Activated CD4-positive, alpha-beta T cell treated with anti-CD3 and anti-CD28 coated beads, Interleukin-2, amount 10 ng/mL, durations not matched to agents 24 days and 14 days (primary cell): ENCODE measurements at regions of chr7 and their contacts with region 1.

Region 1: DNA sequence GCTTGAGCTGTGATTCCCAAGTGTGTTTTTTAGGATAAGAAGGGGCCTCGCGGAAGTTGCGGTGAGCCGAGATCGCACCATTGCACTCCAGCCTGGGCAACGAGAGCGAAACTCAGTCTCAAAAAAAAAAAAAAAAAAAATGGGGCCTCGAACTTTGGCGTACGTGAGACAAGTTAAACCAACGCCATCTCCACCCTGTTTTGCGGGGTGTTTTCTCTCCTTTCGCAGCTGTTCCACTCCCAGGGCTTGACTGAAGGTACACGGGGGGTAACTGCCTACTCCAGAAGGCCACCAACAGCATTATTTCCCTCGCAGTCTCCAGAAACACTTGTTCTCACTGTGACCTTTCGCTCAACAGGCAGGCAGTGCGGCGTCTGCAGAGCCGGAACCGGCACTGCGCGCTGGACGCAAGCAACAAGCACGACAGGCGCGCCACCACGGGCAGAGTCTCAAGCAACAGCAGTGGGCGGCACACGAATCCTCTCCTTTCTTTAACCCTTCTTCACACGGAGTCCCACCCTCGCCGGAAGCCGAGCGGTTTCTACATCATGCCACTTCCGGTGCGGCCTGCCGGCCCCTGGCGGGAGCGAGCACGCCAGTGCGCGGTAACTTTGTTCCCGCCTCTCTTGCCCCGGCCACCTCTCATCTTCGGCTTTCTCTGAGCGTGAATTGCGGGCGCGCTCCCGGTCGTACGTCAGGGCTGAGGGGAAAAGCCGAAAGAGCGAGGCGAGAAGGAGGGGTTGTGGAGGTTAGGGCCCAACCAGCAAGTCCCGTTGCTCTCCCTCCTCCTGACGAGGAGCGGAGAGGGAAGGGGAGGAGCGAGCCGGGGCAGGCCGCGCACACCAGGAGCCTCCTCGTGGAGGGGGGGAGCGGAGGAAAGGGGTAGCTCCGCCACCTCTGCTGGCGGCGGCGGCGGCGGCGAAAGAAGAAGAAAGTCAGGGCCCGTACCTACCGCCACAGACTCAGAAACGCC is 814 bp upstream of the CDK13 start:
- DNase-seq: peak; percentile 99
- H3K4me3 Mint-ChIP-seq: peak overlapping the region; percentile 96
- H3K27ac Mint-ChIP-seq: peak overlapping the region; percentile 99
- H3K4me1 Mint-ChIP-seq: peaks cover 33% of the 10 kb centered on the region
- H3K27me3 Mint-ChIP-seq: peaks cover 2% of the 10 kb centered on the region

Region 2: GRCh38 chr7:39589323-39590111 is 359.7 kb before region 1 on chr7:
- intact Hi-C with region 1: loop called (anchors 2 kb)
- DNase-seq: peak; percentile 93
- H3K4me3 Mint-ChIP-seq: peak overlapping the region; percentile 73
- H3K27ac Mint-ChIP-seq: peak overlapping the region; percentile 93
- H3K4me1 Mint-ChIP-seq: peaks cover 38% of the 10 kb centered on the region
- H3K27me3 Mint-ChIP-seq: peaks cover 2% of the 10 kb centered on the region

Region 3: DNA sequence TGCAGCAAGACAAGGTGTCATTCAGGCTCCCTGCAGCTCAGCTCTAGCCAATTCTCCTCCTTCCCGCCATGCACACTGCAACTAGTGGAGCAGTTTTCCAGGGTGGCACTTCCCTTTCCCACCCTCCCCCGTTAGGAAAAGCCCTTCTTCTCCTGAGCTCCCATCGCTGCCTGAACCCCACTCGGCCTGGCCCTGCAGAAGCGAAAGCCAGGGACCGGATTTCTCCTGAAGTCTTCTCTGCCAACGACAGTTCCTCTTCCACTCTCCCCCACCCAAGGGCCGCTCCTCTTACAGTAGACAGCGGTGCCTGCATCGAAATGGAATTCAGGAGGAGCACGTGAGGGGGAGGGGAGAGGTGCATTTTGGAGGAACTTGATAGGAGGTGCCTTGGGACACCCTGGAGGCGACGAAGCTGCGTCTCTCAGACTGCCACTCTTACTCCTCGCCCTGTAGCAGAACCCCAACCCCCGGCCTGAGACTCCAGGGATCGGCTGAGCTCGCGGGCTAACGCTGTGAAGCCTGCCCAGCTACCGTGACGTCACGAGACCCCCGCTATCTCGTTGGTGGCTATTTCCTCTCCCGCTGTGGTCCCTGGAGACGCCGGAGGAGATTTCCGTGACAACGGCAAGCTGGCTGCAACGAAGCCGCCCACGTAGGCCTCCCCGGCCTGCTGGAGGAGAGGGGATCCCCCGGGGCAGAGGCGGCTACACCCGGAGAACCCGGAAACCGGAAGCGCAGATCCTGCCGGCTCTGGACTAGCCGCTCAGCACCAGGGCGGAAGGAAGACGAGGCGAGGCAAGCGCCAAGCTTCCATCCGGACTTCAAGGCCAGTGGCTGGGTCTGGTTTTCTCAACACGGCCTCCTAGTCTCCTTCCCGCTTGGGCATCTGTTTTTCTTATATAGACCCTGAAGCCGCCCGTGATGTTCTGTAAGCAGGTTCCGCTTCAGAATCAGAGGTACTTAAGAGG is 216.1 kb before region 1 on chr7:
- intact Hi-C with region 1: loop called (anchors 1 kb)
- DNase-seq: peak; percentile 99
- H3K4me3 Mint-ChIP-seq: peak overlapping the region; percentile 90
- H3K27ac Mint-ChIP-seq: peak overlapping the region; percentile 92
- H3K4me1 Mint-ChIP-seq: peaks cover 30% of the 10 kb centered on the region
- H3K27me3 Mint-ChIP-seq: peaks cover 5% of the 10 kb centered on the region

Region 4: DNA sequence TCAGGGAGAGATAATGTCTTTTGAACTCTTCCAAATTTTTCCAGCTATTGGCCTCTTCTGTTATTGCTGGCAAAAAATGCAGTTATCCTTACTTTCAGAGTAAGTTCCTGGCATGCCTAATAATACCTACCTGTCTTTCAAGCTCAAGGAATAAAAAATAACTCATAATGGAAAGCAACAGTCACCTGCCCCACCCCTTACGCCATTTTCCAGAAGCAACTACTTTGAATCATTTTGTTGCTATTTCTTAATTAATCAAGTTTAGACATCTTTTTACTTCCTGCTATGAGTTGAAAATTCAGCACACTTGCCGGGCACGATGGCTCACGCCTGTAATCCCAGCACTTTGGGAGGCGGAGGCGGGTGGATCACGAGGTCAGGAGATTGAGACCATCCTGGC is 22.2 kb before region 1 on chr7:
- intact Hi-C with region 1: no loop called
- DNase-seq: no peak
- H3K4me3 Mint-ChIP-seq: no peak overlapping the region
- H3K27ac Mint-ChIP-seq: no peak overlapping the region
- H3K4me1 Mint-ChIP-seq: no peaks in the 10 kb centered on the region
- H3K27me3 Mint-ChIP-seq: peaks cover 13% of the 10 kb centered on the region

Region 5: DNA sequence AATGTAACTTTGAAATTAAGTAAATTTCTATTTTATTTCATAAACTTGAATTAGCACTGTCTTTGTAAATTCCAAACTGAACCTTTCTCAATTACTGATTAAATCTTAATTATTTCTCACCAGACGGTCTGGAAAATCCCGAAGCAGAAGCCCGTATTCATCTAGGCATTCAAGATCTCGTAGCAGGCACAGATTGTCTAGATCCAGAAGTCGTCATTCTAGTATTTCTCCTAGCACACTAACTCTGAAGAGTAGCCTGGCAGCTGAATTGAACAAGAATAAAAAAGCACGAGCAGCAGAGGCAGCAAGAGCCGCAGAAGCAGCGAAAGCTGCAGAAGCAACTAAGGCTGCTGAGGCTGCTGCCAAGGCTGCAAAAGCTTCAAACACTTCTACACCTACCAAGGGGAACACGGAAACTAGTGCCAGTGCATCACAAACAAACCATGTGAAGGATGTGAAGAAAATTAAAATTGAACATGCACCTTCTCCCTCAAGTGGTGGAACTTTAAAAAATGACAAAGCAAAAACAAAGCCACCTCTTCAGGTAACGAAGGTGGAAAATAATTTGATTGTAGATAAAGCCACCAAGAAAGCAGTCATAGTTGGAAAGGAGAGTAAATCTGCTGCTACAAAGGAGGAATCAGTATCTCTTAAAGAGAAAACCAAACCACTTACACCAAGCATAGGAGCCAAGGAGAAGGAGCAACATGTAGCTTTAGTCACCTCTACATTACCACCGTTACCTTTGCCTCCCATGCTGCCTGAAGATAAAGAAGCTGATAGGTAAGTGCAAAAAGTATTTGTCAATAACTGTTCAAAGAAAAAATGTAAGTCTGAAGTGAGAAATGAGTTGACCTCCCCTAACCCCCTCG is 38.5 kb after region 1 on chr7:
- intact Hi-C with region 1: loop called (anchors 2 kb)
- DNase-seq: no peak
- H3K4me3 Mint-ChIP-seq: no peak overlapping the region
- H3K27ac Mint-ChIP-seq: no peak overlapping the region
- H3K4me1 Mint-ChIP-seq: peaks cover 28% of the 10 kb centered on the region
- H3K27me3 Mint-ChIP-seq: no peaks in the 10 kb centered on the region

Region 6: DNA sequence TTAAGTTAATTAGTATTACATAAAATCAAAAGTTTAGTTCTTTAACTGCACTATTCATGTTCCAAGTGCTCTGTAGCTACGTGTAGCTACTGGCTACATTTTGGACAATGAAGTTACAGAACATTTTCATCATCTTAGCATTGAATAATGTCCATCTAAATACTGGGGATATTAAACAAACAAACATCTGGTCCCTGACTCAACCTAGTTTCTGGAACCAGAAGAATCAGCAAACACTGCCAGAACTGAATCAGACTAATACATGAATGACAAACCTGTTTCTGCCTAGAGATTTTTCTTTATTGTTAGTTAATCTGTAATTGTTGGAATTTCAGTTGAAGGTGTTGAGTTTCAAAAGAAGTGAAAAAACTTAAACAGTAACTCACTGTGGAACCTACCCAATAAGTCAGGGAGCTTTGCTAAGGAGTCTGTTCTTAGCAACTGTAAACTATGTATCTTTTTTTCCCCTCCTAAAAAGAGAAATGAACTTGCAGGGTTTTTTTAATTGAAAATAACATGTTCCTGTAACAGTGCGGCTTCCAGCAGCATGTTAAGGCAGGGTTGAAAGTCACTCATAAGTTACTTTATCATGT is 59.1 kb after region 1 on chr7:
- intact Hi-C with region 1: no loop called
- DNase-seq: no peak
- H3K4me3 Mint-ChIP-seq: no peak overlapping the region
- H3K27ac Mint-ChIP-seq: no peak overlapping the region
- H3K4me1 Mint-ChIP-seq: peaks cover 2% of the 10 kb centered on the region
- H3K27me3 Mint-ChIP-seq: no peaks in the 10 kb centered on the region

Region 7: DNA sequence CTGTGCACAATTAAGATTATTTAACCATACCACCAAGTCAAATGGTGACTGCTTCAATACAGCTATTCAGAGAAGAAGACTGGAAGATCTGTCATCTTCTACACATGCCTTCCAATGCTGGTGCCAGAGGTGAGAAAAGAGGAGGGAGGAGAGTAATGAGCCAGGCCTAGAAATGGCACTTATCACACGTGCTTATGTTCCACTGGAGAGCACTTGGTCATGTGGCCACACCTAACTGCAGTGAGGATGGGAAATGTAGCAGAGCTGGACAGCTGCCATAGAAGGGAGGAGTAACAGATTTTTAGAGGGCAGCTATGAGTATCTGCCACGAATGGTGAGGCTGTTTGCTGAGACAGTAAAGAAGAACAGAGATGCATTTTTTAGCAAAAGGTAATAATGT is 108.0 kb after region 1 on chr7:
- intact Hi-C with region 1: loop called (anchors 1 kb)
- DNase-seq: no peak
- H3K4me3 Mint-ChIP-seq: no peak overlapping the region
- H3K27ac Mint-ChIP-seq: no peak overlapping the region
- H3K4me1 Mint-ChIP-seq: peaks cover 7% of the 10 kb centered on the region
- H3K27me3 Mint-ChIP-seq: no peaks in the 10 kb centered on the region

Region 8: GRCh38 chr7:41881331-41882130 is 1932.3 kb after region 1 on chr7:
- intact Hi-C with region 1: loop called (anchors 5 kb)
- DNase-seq: peak; percentile 93
- H3K4me3 Mint-ChIP-seq: peak overlapping the region; percentile 83
- H3K27ac Mint-ChIP-seq: peak overlapping the region; percentile 98
- H3K4me1 Mint-ChIP-seq: peaks cover 49% of the 10 kb centered on the region
- H3K27me3 Mint-ChIP-seq: no peaks in the 10 kb centered on the region